ENCODE measurements at regions of chr12 and their contacts with region 1.

Region 1: DNA sequence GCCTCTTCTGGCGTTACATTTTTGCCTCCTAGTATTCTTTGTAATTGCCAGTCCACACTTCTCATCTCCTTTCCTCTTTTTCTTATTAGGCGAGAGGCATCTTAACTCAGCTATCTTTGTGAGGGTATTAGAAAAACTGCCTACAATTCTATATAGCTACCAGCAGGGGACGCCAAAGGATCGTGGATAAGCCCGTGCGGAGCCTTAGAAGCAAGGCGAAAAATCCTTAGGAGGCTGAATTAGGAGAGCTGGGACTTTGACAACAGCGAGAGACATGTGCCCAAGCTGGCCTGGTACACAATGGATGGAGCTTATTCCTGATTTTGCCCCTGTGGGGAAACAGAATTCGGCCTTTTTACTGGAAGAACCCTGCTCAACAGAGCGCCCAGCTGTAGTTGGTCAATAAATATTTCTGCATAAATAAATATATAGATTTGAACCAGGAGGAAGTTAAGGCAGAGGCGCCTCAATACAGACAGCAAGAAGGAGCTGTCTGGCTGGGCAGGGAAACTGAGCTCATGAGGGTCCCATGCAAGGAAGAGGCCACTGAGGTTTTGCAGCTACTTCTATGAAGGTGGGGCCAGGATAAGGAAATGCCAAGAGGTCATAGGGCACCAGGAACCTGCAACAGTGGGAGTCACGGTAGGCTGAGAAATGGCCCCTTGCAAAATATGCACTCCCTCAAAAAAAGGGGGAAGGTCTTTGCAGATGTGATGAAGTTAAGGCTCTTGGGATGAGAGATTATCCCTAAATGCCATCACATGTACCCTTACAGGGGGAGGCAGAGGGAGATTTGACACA is 14.6 kb upstream of the RBM19 start:
- DNase-seq: peak in 1 of 5 donors; percentile 10
- H3K4me3 ChIP-seq: no peak overlapping the region
- H3K4me3 Mint-ChIP-seq: no peak overlapping the region
- H3K27ac ChIP-seq: no peak overlapping the region
- H3K27ac Mint-ChIP-seq: no peak overlapping the region
- H3K4me1 ChIP-seq: no peaks in the 10 kb centered on the region
- H3K4me1 Mint-ChIP-seq: peaks cover 0 to 3% (median 0%) of the 10 kb centered on the region in 3 donors
- H3K27me3 ChIP-seq: peaks cover 8% of the 10 kb centered on the region
- H3K27me3 Mint-ChIP-seq: peaks cover 27 to 44% of the 10 kb centered on the region in 2 donors

Region 2: DNA sequence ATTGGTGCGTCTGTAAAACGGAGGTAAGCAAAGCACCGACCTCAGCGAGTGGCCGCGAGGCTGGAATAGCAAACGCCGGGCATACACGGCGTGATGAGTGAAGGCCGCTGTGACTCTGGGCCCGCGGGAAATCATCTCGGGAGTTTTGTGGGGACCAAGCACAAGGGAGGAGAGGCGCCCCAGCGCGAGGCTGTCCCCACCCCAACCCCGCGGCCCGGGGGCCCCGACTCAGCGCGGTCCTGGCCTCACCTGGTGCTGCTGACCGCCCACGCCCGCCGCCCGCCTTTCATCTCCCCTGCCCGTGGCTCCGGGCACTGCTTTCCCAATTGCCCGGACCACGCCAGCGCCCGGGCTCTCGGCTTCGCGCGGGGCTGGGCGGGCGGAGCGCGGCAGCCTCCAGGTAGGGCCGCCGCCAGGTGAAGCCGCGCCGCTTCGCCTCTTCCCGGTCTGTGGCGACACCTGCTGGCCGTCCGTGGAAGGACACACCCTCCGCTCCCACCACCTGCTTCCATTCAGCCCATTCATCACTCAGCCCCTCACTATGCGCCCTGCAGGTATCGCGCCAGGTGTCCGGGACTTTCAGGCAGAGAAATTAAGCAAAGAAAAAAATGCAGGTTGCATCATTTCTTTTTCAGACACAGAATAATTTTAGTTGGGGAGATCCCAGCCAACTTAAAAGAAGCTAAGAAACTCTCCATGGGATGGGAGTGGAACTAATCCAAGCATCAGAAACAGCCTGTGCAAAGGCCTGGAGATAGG is 1936.4 kb after region 1 on chr12:
- CTCF ChIA-PET with region 1: interaction called, 10 read pairs
- POLR2A ChIA-PET with region 1: no interaction called
- DNase-seq: peak; percentile 42 to 77 (median 61)
- H3K4me3 ChIP-seq: no peak overlapping the region
- H3K4me3 Mint-ChIP-seq: peak overlapping the region in 3 of 7 donors; percentile 7 to 59 (median 44)
- H3K27ac ChIP-seq: no peak overlapping the region
- H3K27ac Mint-ChIP-seq: no peak overlapping the region
- H3K4me1 ChIP-seq: no peaks in the 10 kb centered on the region
- H3K4me1 Mint-ChIP-seq: peaks cover 0 to 3% (median 2%) of the 10 kb centered on the region in 3 donors
- H3K27me3 ChIP-seq: no peaks in the 10 kb centered on the region
- H3K27me3 Mint-ChIP-seq: peaks cover 29 to 75% of the 10 kb centered on the region in 2 donors